Calu3 (cell line): ENCODE measurements at regions of chr4 and their contacts with region 1.

Region 1: DNA sequence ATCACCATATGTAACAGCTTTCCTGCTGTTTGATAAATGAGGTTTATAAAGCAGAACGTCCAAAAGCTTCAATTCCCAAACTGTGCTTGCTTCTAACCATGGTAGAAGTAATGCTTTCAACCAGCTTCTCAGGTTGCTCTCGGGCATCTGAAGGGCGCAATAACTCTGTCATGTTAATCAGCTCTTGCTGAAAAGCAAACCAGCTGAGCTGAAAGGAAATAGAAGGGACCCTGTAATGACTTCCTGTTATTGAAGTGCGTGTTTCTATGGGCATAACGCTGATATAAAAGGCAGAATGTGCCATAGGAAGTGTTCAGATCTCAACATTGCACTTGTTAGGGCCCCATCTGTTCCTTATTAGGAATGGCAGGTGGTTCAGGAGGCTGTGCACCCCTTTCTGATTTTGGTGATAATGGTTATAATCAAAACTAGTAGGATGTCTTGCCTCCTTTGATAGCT is 21.2 kb downstream of the HERC3 start:
- DNase-seq: peak; percentile 13
- H3K4me3 Mint-ChIP-seq: peak overlapping the region; percentile 30
- H3K27ac Mint-ChIP-seq: peak overlapping the region; percentile 98
- H3K4me1 Mint-ChIP-seq: peaks cover 49% of the 10 kb centered on the region
- H3K27me3 Mint-ChIP-seq: no peaks in the 10 kb centered on the region
- CTCF ChIP-seq: no peak

Region 2: DNA sequence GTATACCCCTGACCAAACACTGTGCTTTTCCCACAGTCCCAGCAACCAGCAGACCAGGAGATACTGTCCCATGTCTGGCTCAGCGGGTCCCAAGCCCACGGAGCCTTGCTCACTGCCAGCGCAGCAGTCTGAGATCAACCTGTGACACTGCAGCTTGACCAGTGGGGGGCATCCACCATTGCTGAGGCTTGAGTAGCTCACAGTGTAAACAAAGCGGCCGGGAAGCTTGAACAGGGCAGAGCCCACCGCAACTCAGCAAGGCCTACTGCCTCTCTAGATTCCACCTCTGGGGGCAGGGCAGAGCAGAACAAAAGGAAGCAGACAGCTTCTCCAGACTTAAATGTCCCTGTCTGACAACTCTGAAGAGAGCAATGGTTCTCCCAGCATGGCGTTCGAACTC is 1822.3 kb before region 1 on chr4:
- CTCF ChIA-PET with region 1: no interaction called
- intact Hi-C with region 1: no loop called
- DNase-seq: no peak
- H3K4me3 Mint-ChIP-seq: no peak overlapping the region
- H3K27ac Mint-ChIP-seq: no peak overlapping the region
- H3K4me1 Mint-ChIP-seq: no peaks in the 10 kb centered on the region
- H3K27me3 Mint-ChIP-seq: no peaks in the 10 kb centered on the region
- CTCF ChIP-seq: no peak

Region 3: DNA sequence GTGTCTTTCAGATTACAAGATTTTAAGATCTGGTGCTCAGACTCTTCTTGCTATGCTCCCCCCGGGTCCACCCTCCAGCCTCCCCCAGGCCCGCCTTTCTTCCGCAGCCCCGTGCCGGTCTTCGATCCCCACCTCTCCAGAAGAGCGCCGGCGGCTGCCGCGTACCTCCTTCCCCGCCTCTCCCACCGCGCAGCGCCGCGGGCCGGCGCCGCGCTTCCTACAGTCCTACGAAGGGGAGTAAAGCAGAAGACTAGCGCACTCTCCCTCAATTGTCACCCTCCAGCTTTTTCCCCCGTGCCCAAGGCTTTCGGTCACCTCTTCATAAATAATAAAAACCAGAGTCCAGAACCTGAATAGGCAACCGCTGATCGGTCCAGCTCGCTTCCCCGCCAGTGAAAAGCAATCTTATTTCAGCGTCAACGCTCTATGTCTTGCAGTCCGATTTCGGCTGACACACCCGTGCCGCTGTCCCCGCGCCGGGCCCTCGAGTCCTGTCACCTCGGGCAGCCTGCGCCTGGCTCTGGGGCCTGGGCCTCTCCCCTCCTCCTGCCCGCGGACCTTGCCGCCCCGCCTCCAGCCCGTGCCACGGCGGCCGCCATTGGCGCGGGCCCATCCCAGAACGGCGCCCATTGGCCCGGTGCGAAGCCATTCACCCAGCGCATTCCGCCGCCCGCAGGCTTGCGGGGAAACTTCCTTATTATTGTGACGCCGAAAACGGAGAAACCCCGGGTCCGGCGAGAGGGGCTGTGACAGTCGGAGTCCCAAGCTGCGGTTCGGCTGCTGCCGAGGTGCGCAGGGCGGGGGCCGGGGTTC is 21.5 kb before region 1 on chr4 and contains the start of gene HERC3:
- CTCF ChIA-PET with region 1: interaction called, 10 read pairs
- intact Hi-C with region 1: no loop called
- DNase-seq: peak; percentile 88
- H3K4me3 Mint-ChIP-seq: peak within 1 kb of the TSS; percentile 99
- H3K27ac Mint-ChIP-seq: peak within 1 kb of the TSS; percentile 56
- H3K4me1 Mint-ChIP-seq: no peaks in the 10 kb centered on the region
- H3K27me3 Mint-ChIP-seq: no peaks in the 10 kb centered on the region
- CTCF ChIP-seq: no peak
- total RNA-seq, gene HERC3: 17.3 and 17.8 TPM in 2 replicates